ENCODE measurements at regions of chr12 and their contacts with region 1.

Region 1: GRCh38 chr12:58765653-58766512 is 154.4 kb downstream of the LRIG3 start:
- DNase-seq: peak; percentile 59
- ATAC-seq: peak; percentile 25
- H3K4me3 ChIP-seq: no peak overlapping the region
- H3K27ac ChIP-seq: peak overlapping the region; percentile 87; the same call in 1 of the 2 replicates
- H3K4me1 ChIP-seq: peaks cover 9% of the 10 kb centered on the region
- H3K27me3 ChIP-seq: no peaks in the 10 kb centered on the region
- CTCF ChIP-seq: no peak
- POLR2A ChIP-seq: no peak
- RAD21 ChIP-seq: no peak

Region 2: GRCh38 chr12:59087077-59087673 is 321.3 kb after region 1 on chr12:
- CTCF ChIA-PET with region 1: no interaction called
- POLR2A ChIA-PET with region 1: no interaction called
- dilution Hi-C with region 1: no loop called
- in situ Hi-C with region 1: no loop called
- intact Hi-C with region 1: loop called (anchors 10 kb)
- DNase-seq: peak; percentile 39
- ATAC-seq: peak; percentile 69
- H3K4me3 ChIP-seq: no peak overlapping the region
- H3K27ac ChIP-seq: no peak overlapping the region
- H3K4me1 ChIP-seq: peaks cover 13% of the 10 kb centered on the region
- H3K27me3 ChIP-seq: no peaks in the 10 kb centered on the region
- CTCF ChIP-seq: peak; percentile 81
- POLR2A ChIP-seq: no peak
- RAD21 ChIP-seq: peak; percentile 74

Measured in IMR-90 (cell line).